Natural killer cell (primary cell): ENCODE measurements at regions of chr2 and their contacts with region 1.

Region 1: GRCh38 chr2:229141424-229142025 is 129.6 kb downstream of the PID1 start:
- DNase-seq: no peak
- ATAC-seq: no peak
- H3K4me3 ChIP-seq: no peak overlapping the region
- H3K4me3 Mint-ChIP-seq: no peak overlapping the region
- H3K27ac ChIP-seq: no peak overlapping the region
- H3K27ac Mint-ChIP-seq: no peak overlapping the region
- H3K4me1 ChIP-seq: no peaks in the 10 kb centered on the region
- H3K4me1 Mint-ChIP-seq: no peaks in the 10 kb centered on the region
- H3K27me3 ChIP-seq: no peaks in the 10 kb centered on the region
- H3K27me3 Mint-ChIP-seq: no peaks in the 10 kb centered on the region
- CTCF ChIP-seq: no peak

Region 2: DNA sequence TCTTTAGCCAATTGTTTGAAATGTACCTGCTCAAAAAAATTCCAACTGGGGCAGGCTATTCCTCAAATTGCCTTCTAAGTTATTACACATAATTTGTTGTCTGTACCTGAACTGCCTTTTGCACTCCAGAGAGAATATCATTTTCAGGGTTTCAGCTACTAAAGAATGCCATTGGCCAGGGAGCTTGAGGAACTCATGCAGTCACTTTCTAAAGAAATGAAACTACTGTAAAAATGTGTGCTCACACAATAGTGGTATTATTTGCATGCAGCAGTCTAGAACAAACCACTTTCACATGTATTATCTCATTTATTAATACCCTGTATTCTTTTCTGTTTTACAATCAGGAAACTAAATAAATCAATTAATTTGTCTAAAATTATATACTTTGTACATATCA is 22.6 kb before region 1 on chr2:
- intact Hi-C with region 1: loop called (anchors 1 kb)
- DNase-seq: no peak
- ATAC-seq: no peak
- H3K4me3 ChIP-seq: no peak overlapping the region
- H3K4me3 Mint-ChIP-seq: no peak overlapping the region
- H3K27ac ChIP-seq: no peak overlapping the region
- H3K27ac Mint-ChIP-seq: no peak overlapping the region
- H3K4me1 ChIP-seq: no peaks in the 10 kb centered on the region
- H3K4me1 Mint-ChIP-seq: no peaks in the 10 kb centered on the region
- H3K27me3 ChIP-seq: no peaks in the 10 kb centered on the region
- H3K27me3 Mint-ChIP-seq: no peaks in the 10 kb centered on the region
- CTCF ChIP-seq: no peak

Region 3: GRCh38 chr2:229282758-229283546 is 141.4 kb after region 1 on chr2:
- intact Hi-C with region 1: no loop called
- DNase-seq: no peak
- ATAC-seq: peak in 1 of 3 donors; percentile 29
- H3K4me3 ChIP-seq: no peak overlapping the region
- H3K4me3 Mint-ChIP-seq: no peak overlapping the region
- H3K27ac ChIP-seq: no peak overlapping the region
- H3K27ac Mint-ChIP-seq: no peak overlapping the region
- H3K4me1 ChIP-seq: no peaks in the 10 kb centered on the region
- H3K4me1 Mint-ChIP-seq: no peaks in the 10 kb centered on the region
- H3K27me3 ChIP-seq: no peaks in the 10 kb centered on the region
- H3K27me3 Mint-ChIP-seq: no peaks in the 10 kb centered on the region
- CTCF ChIP-seq: no peak